ENCODE measurements at regions of chr1 and their contacts with region 1.

Region 1: GRCh38 chr1:53485478-53486394 is 26.5 kb downstream of the DMRTB1 start:
- DNase-seq: peak; percentile 77
- H3K4me3 ChIP-seq: no peak overlapping the region
- H3K27ac ChIP-seq: no peak overlapping the region
- H3K4me1 ChIP-seq: no peaks in the 10 kb centered on the region
- H3K27me3 ChIP-seq: peaks cover 100% of the 10 kb centered on the region
- CTCF ChIP-seq: peak; percentile 86

Region 2: DNA sequence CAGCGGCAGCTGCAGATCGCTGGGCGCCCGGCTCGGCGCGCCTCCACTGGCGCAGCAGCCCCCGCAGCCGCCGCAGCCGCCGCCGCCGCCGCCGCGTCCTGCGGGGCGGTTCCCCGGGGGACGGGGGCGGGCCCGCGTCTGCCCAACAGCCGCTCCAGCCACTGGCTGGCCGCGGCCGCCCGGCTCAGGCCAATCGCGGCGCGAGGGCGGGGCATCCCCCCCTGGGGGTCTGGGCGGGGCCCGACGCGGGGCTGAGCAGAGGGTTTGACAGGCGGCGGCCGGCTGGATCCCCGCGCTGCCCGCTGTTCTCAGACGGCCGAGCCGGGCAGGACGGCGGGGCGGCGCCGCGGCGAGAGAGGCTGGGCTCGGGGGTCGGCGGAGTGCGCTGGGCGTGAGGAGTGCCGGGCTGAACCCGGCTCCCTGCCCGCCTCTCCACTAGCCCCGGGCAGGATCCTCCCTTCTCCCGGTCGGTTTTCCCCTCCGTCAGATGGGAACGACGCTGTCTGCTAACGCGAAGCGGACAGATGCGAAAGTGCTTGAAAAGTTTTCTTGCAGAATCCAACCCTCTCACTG is 253.5 kb after region 1 on chr1 and contains the start of gene GLIS1:
- intact Hi-C with region 1: no loop called
- DNase-seq: peak; percentile 83
- H3K4me3 ChIP-seq: peak within 1 kb of the TSS; percentile 80
- H3K27ac ChIP-seq: no peak within 1 kb of the TSS
- H3K4me1 ChIP-seq: peaks cover 24% of the 10 kb centered on the region
- H3K27me3 ChIP-seq: peaks cover 92% of the 10 kb centered on the region
- CTCF ChIP-seq: no peak
- total RNA-seq, gene GLIS1: 0.16 TPM

Region 3: GRCh38 chr1:53754484-53755312 is 269.0 kb after region 1 on chr1:
- intact Hi-C with region 1: loop called (anchors 5 kb)
- DNase-seq: no peak
- H3K4me3 ChIP-seq: no peak overlapping the region
- H3K27ac ChIP-seq: no peak overlapping the region
- H3K4me1 ChIP-seq: no peaks in the 10 kb centered on the region
- H3K27me3 ChIP-seq: no peaks in the 10 kb centered on the region
- CTCF ChIP-seq: peak; percentile 75

Measured in left ventricle myocardium inferior (tissue), 1 donor.